CD8-positive, alpha-beta T cell (primary cell): ENCODE measurements at regions of chr17 and their contacts with region 1.

Region 1: DNA sequence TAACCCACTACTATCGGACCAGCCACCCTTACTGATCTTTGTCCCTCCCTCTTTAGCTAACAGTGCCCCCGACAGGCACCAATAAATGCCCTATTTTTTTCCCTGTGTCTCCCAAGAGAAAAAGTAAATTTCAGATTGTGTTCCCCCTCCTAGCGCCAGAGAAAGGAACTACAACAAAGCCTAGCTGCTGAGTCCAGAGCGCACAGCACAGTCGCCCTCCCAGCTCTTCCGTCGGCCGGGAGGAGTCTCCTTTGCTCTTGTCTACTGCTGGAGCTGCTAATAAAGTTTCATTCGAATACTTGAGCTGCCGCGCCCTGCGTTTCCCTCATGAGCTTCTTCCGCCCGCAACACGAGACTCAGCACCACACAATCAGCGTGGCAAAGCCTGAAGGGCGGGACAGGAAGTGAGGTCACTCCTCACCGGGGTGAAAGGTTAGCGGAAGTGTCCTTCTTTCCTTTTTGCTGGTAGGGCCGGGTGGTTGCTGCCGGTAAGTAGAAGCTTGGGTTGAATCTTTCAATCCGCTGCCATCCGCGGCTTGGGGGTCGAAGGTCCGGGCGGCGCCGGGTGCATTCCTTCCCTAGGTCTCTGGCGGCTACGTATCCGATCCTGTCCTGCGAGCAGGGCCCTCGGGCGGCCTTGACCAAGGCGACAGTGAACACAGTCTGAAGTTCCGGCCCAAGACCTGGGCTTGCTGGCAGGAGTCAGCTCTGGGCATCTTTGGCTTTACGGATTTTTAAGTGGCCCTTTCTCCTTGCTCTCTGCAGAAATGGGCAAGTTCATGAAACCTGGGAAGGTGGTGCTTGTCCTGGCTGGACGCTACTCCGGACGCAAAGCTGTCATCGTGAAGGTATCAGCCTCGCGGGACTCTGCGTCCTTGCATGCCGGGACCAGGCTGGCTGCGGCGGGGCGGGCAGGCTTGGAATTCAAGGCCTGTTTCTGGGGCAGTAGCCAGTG is at the start of gene RPL27:
- DNase-seq: peak; percentile 95 to 100 (median 98)
- ATAC-seq: peak; percentile 93
- H3K4me3 ChIP-seq: peak within 1 kb of the TSS; percentile 61 to 89
- H3K4me3 Mint-ChIP-seq: peak within 1 kb of the TSS; percentile 94
- H3K27ac ChIP-seq: peak within 1 kb of the TSS; percentile 90 to 95
- H3K27ac Mint-ChIP-seq: peak within 1 kb of the TSS; percentile 99
- H3K4me1 ChIP-seq: peaks cover 16% of the 10 kb centered on the region
- H3K4me1 Mint-ChIP-seq: peaks cover 25% of the 10 kb centered on the region
- H3K27me3 ChIP-seq: no peaks in the 10 kb centered on the region
- H3K27me3 Mint-ChIP-seq: no peaks in the 10 kb centered on the region
- CTCF ChIP-seq: peak; percentile 90
- total RNA-seq, gene RPL27: 1,796 to 1,873 TPM

Region 2: GRCh38 chr17:42586514-42587230 is 411.6 kb before region 1 on chr17:
- CTCF ChIA-PET with region 1: no interaction called
- POLR2A ChIA-PET with region 1: no interaction called
- intact Hi-C with region 1: no loop called
- DNase-seq: no peak
- ATAC-seq: no peak
- H3K4me3 ChIP-seq: no peak overlapping the region
- H3K4me3 Mint-ChIP-seq: no peak overlapping the region
- H3K27ac ChIP-seq: no peak overlapping the region
- H3K27ac Mint-ChIP-seq: peak overlapping the region; percentile 52
- H3K4me1 ChIP-seq: no peaks in the 10 kb centered on the region
- H3K4me1 Mint-ChIP-seq: peaks cover 5% of the 10 kb centered on the region
- H3K27me3 ChIP-seq: no peaks in the 10 kb centered on the region
- H3K27me3 Mint-ChIP-seq: no peaks in the 10 kb centered on the region
- CTCF ChIP-seq: no peak

Region 3: GRCh38 chr17:42744806-42745617 is 253.2 kb before region 1 on chr17 and contains the start of gene EZH1:
- CTCF ChIA-PET with region 1: no interaction called
- POLR2A ChIA-PET with region 1: no interaction called
- intact Hi-C with region 1: loop called in 1 of 2 experiments (anchors 1 kb)
- DNase-seq: peak; percentile 82 to 96 (median 90)
- ATAC-seq: peak; percentile 92
- H3K4me3 ChIP-seq: peak within 1 kb of the TSS; percentile 72 to 73
- H3K4me3 Mint-ChIP-seq: peak within 1 kb of the TSS; percentile 98
- H3K27ac ChIP-seq: peak within 1 kb of the TSS; percentile 62 to 79
- H3K27ac Mint-ChIP-seq: peak within 1 kb of the TSS; percentile 96
- H3K4me1 ChIP-seq: peaks cover 17% of the 10 kb centered on the region
- H3K4me1 Mint-ChIP-seq: peaks cover 31% of the 10 kb centered on the region
- H3K27me3 ChIP-seq: peaks cover 0 to 4% of the 10 kb centered on the region in 2 experiments
- H3K27me3 Mint-ChIP-seq: peaks cover 13% of the 10 kb centered on the region
- CTCF ChIP-seq: no peak
- total RNA-seq, gene EZH1: 59.2 to 63.4 TPM

Region 4: DNA sequence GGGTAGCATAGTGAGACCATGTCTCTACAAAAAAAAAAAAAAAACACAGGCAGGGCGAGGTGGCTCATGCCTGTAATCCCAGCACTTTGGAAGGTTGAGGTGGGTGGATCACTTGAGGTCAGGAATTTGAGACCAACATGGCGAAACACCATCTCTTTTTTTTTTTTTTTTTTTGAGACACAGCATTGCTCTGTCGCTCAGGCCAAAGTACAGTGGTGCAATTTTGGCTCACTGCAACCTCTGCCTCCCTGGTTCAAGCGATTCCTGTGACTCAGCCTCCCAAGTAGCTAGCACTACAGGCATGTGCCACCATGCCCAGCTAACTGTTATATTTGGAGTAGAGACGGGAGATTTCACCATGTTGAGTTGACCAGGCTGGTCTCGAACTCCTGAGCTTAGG is 232.1 kb before region 1 on chr17:
- CTCF ChIA-PET with region 1: no interaction called
- POLR2A ChIA-PET with region 1: no interaction called
- intact Hi-C with region 1: no loop called
- DNase-seq: no peak
- ATAC-seq: no peak
- H3K4me3 ChIP-seq: no peak overlapping the region
- H3K4me3 Mint-ChIP-seq: no peak overlapping the region
- H3K27ac ChIP-seq: no peak overlapping the region
- H3K27ac Mint-ChIP-seq: no peak overlapping the region
- H3K4me1 ChIP-seq: peaks cover 5% of the 10 kb centered on the region
- H3K4me1 Mint-ChIP-seq: peaks cover 8% of the 10 kb centered on the region
- H3K27me3 ChIP-seq: peaks cover 18 to 28% of the 10 kb centered on the region in 2 experiments
- H3K27me3 Mint-ChIP-seq: peaks cover 45% of the 10 kb centered on the region
- CTCF ChIP-seq: no peak

Region 5: GRCh38 chr17:42980398-42981397 is 17.6 kb before region 1 on chr17 and contains the start of gene RUNDC1:
- CTCF ChIA-PET with region 1: interaction called, 6 read pairs
- POLR2A ChIA-PET with region 1: interaction called, 4 read pairs
- intact Hi-C with region 1: loop called (anchors 1 kb)
- DNase-seq: peak; percentile 77 to 95 (median 91)
- ATAC-seq: peak; percentile 86
- H3K4me3 ChIP-seq: peak within 1 kb of the TSS; percentile 66 to 80
- H3K4me3 Mint-ChIP-seq: peak within 1 kb of the TSS; percentile 97
- H3K27ac ChIP-seq: peak within 1 kb of the TSS; percentile 65 to 67
- H3K27ac Mint-ChIP-seq: peak within 1 kb of the TSS; percentile 97
- H3K4me1 ChIP-seq: peaks cover 20% of the 10 kb centered on the region
- H3K4me1 Mint-ChIP-seq: peaks cover 41% of the 10 kb centered on the region
- H3K27me3 ChIP-seq: no peaks in the 10 kb centered on the region
- H3K27me3 Mint-ChIP-seq: no peaks in the 10 kb centered on the region
- CTCF ChIP-seq: peak; percentile 50
- total RNA-seq, gene RUNDC1: 19.2 to 19.4 TPM

Region 6: GRCh38 chr17:43211480-43212402 is 213.5 kb after region 1 on chr17 and contains the start of gene TMEM106A:
- CTCF ChIA-PET with region 1: interaction called, 4 read pairs
- POLR2A ChIA-PET with region 1: interaction called, 7 read pairs
- intact Hi-C with region 1: loop called in 1 of 2 experiments (anchors 1 kb)
- DNase-seq: peak; percentile 50 to 89 (median 76)
- ATAC-seq: peak; percentile 92
- H3K4me3 ChIP-seq: peak within 1 kb of the TSS; percentile 82 to 95
- H3K4me3 Mint-ChIP-seq: peak within 1 kb of the TSS; percentile 98
- H3K27ac ChIP-seq: peak within 1 kb of the TSS; percentile 75 to 82
- H3K27ac Mint-ChIP-seq: peak within 1 kb of the TSS; percentile 96
- H3K4me1 ChIP-seq: peaks cover 25% of the 10 kb centered on the region
- H3K4me1 Mint-ChIP-seq: peaks cover 40% of the 10 kb centered on the region
- H3K27me3 ChIP-seq: no peaks in the 10 kb centered on the region
- H3K27me3 Mint-ChIP-seq: no peaks in the 10 kb centered on the region
- CTCF ChIP-seq: peak; percentile 58
- total RNA-seq, gene TMEM106A: 8.9 to 9.2 TPM

Region 7: GRCh38 chr17:43367737-43368242 is 369.5 kb after region 1 on chr17:
- CTCF ChIA-PET with region 1: interaction called, 4 read pairs
- POLR2A ChIA-PET with region 1: interaction called, 19 read pairs
- intact Hi-C with region 1: no loop called
- DNase-seq: peak in 5 of 9 experiments; percentile 16 to 86 (median 24)
- ATAC-seq: peak; percentile 57
- H3K4me3 ChIP-seq: peak overlapping the region; percentile 73 to 76
- H3K4me3 Mint-ChIP-seq: peak overlapping the region; percentile 97
- H3K27ac ChIP-seq: peak overlapping the region; percentile 97 to 98
- H3K27ac Mint-ChIP-seq: peak overlapping the region; percentile 100
- H3K4me1 ChIP-seq: peaks cover 20% of the 10 kb centered on the region
- H3K4me1 Mint-ChIP-seq: peaks cover 38% of the 10 kb centered on the region
- H3K27me3 ChIP-seq: no peaks in the 10 kb centered on the region
- H3K27me3 Mint-ChIP-seq: no peaks in the 10 kb centered on the region
- CTCF ChIP-seq: no peak